HEK293 (cell line): ENCODE measurements at regions of chr6 and their contacts with region 1.

Region 1: GRCh38 chr6:43769526-43770416 is at the start of gene VEGFA:
- H3K4me3 ChIP-seq: peak within 1 kb of the TSS; percentile 84
- H3K27ac ChIP-seq: peak within 1 kb of the TSS; percentile 82
- H3K4me1 ChIP-seq: no peaks in the 10 kb centered on the region; the same call in 1 of the 2 replicates
- CTCF ChIP-seq: peak; percentile 98

Region 2: GRCh38 chr6:43477235-43478007 is 292.4 kb before region 1 on chr6 and contains the start of gene TJAP1:
- CTCF ChIA-PET with region 1: no interaction called
- POLR2A ChIA-PET with region 1: no interaction called
- H3K4me3 ChIP-seq: peak within 1 kb of the TSS; percentile 81
- H3K27ac ChIP-seq: peak within 1 kb of the TSS; percentile 50
- H3K4me1 ChIP-seq: peaks cover 10% of the 10 kb centered on the region
- CTCF ChIP-seq: no peak

Region 3: GRCh38 chr6:43667245-43668150 is 102.3 kb before region 1 on chr6:
- CTCF ChIA-PET with region 1: interaction called, 56 read pairs
- POLR2A ChIA-PET with region 1: interaction called, 36 read pairs
- H3K4me3 ChIP-seq: peak overlapping the region; percentile 10; the same call in 1 of the 2 replicates
- H3K27ac ChIP-seq: peak overlapping the region; percentile 19
- H3K4me1 ChIP-seq: peaks cover 3% of the 10 kb centered on the region; the same call in 1 of the 2 replicates
- CTCF ChIP-seq: peak; percentile 97

Region 4: DNA sequence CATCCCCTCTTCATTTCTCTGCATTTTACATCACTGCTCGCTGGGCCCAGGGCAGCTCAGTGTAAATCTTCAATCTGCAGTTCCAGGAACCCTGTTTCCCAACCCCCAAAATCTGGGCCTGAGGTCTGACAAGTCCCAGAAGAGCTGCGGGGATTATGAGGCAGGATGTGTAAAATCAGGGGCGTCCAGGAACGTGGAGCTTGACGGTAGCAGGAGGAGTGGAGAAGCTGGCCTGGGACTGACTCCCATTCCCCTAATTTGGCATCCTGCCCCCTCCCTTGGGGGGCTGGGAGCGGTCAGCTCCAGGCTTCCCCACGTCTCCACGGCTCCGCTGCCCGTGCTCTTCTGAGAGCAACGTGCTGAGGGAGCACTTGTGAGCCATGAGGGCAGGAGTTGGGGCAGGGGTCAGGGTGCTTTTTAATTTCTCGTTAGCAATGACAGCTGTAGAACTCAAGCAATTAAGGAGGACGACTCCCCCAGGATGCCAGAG is 23.1 kb before region 1 on chr6:
- CTCF ChIA-PET with region 1: interaction called, 33 read pairs
- POLR2A ChIA-PET with region 1: interaction called, 4 read pairs
- H3K4me3 ChIP-seq: no peak overlapping the region
- H3K27ac ChIP-seq: no peak overlapping the region
- H3K4me1 ChIP-seq: no peaks in the 10 kb centered on the region
- CTCF ChIP-seq: no peak

Region 5: GRCh38 chr6:43800746-43801488 is 31.1 kb after region 1 on chr6:
- CTCF ChIA-PET with region 1: interaction called, 18 read pairs
- POLR2A ChIA-PET with region 1: interaction called, 3 read pairs
- H3K4me3 ChIP-seq: no peak overlapping the region
- H3K27ac ChIP-seq: no peak overlapping the region
- H3K4me1 ChIP-seq: no peaks in the 10 kb centered on the region
- CTCF ChIP-seq: no peak

Region 6: GRCh38 chr6:43951063-43951755 is 181.4 kb after region 1 on chr6:
- CTCF ChIA-PET with region 1: interaction called, 20 read pairs
- POLR2A ChIA-PET with region 1: interaction called, 6 read pairs
- H3K4me3 ChIP-seq: no peak overlapping the region
- H3K27ac ChIP-seq: no peak overlapping the region
- H3K4me1 ChIP-seq: no peaks in the 10 kb centered on the region
- CTCF ChIP-seq: peak; percentile 94

Region 7: GRCh38 chr6:44064089-44064947 is 294.5 kb after region 1 on chr6:
- CTCF ChIA-PET with region 1: interaction called, 26 read pairs
- POLR2A ChIA-PET with region 1: interaction called, 9 read pairs
- H3K4me3 ChIP-seq: no peak overlapping the region
- H3K27ac ChIP-seq: no peak overlapping the region
- H3K4me1 ChIP-seq: no peaks in the 10 kb centered on the region
- CTCF ChIP-seq: no peak

Region 8: DNA sequence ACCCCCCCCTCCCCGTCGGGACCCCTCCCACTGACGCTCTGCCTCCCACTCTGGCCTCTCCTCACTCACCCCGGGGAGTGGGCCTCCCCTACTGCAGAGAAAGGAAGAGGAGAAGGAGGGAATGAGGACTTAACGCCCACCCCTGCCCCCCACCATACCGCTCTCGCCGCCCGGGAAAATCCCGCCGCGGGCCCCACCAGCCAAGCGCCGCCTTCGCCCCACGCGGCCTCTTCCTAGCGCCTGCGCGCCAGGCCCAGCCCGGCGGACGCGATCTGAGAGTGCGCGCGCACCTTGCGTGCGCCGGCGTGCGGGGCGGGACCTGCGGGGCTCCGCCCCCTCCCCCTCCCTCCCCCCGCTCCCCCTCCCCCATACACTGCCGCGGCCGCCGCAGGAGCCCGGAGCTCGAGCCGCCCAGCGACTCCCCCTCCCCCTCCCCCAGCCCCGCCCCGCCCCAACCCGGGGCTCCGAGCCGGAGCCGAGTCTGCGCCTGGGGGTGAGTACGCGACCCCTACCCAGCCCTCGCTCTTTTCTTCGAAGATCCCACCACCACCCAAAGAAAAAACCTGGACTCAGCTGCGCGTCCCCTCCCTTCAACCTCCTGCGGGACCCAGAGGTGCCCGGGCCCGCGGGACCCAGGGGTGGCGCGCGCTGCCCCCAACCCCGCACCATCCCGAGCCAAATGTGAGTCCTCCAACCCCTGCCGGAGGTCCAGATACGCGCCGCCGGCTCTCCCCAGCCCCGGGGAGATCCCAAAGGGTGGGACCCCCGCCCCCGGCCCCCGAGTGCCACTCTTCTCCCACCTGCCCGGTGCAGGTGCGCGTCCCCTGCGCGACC is 357.6 kb after region 1 on chr6 and contains the starts of genes MRPL14 and TMEM63B:
- CTCF ChIA-PET with region 1: no interaction called
- POLR2A ChIA-PET with region 1: no interaction called
- H3K4me3 ChIP-seq: peak within 1 kb of the TSS; percentile 85
- H3K27ac ChIP-seq: peak within 1 kb of the TSS; percentile 65
- H3K4me1 ChIP-seq: peaks cover 23% of the 10 kb centered on the region
- CTCF ChIP-seq: no peak